ENCODE measurements at regions of chr6 and their contacts with region 1.

Region 1: GRCh38 chr6:84774157-84774984 is 10.0 kb upstream of the TBX18 start:
- DNase-seq: peak; percentile 81
- ATAC-seq: peak; percentile 92
- H3K4me3 Mint-ChIP-seq: peak overlapping the region; percentile 72
- H3K27ac Mint-ChIP-seq: no peak overlapping the region
- H3K4me1 Mint-ChIP-seq: peaks cover 19% of the 10 kb centered on the region
- H3K27me3 Mint-ChIP-seq: peaks cover 100% of the 10 kb centered on the region
- CTCF ChIP-seq: peak; percentile 75

Region 2: DNA sequence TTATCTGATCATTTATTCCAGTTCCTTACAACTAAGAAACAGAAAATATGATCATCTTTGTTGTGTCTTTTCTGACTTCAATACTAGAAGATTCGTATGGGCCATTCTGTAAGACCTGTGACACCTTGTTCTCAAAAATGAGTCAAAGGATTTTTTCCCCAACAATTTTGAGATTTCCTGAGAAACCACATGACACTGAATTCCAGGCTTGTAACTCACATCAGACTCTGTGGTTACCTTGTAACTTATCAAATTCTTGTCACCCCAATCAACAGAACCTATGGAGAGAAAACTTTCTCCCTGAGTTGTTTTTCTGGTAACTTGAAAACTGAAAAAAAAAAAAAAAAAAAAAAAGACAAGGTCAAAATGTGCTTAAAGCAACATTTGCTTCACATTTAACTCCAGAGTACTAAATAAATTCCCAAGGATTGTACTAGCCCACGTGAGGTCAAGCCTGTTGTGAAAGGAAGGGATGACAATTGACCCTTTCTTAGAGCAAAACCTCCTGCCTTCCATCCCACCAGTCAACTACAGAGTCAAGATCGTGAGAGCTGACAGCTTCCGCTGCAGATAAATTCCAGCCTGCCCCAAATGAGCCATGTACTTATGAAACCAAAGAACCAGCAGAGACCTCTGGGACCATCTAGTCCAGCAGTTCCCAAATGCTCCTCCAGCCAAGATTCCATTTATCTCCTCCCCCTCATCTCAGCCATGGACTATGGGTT is 150.3 kb before region 1 on chr6:
- CTCF ChIA-PET with region 1: no interaction called
- POLR2A ChIA-PET with region 1: no interaction called
- DNase-seq: no peak
- ATAC-seq: no peak
- H3K4me3 Mint-ChIP-seq: no peak overlapping the region
- H3K27ac Mint-ChIP-seq: no peak overlapping the region
- H3K4me1 Mint-ChIP-seq: peaks cover 28% of the 10 kb centered on the region
- H3K27me3 Mint-ChIP-seq: no peaks in the 10 kb centered on the region
- CTCF ChIP-seq: no peak

Region 3: DNA sequence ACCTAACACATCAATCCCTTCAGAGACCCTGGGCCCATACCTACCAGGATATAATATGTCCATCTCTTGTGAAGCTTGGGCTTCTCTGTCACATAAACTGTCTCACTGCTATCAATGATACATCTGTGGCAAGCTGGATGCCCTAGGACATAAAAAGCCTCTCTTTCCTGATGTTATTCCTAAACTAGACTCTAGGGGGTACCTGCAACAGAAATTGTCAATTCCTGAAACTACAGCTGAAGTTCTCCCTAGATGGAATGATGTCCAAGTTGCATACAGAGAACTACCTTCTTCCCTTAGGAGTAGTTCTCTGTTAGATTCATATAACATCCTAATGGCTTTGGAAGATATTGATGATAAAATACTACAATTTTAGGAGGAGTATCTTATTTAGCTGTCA is 45.8 kb before region 1 on chr6:
- CTCF ChIA-PET with region 1: interaction called, 13 read pairs
- POLR2A ChIA-PET with region 1: no interaction called
- DNase-seq: no peak
- ATAC-seq: peak; percentile 78
- H3K4me3 Mint-ChIP-seq: no peak overlapping the region
- H3K27ac Mint-ChIP-seq: no peak overlapping the region
- H3K4me1 Mint-ChIP-seq: no peaks in the 10 kb centered on the region
- H3K27me3 Mint-ChIP-seq: no peaks in the 10 kb centered on the region; the same call in none of the 2 replicates
- CTCF ChIP-seq: peak; percentile 53

Region 4: DNA sequence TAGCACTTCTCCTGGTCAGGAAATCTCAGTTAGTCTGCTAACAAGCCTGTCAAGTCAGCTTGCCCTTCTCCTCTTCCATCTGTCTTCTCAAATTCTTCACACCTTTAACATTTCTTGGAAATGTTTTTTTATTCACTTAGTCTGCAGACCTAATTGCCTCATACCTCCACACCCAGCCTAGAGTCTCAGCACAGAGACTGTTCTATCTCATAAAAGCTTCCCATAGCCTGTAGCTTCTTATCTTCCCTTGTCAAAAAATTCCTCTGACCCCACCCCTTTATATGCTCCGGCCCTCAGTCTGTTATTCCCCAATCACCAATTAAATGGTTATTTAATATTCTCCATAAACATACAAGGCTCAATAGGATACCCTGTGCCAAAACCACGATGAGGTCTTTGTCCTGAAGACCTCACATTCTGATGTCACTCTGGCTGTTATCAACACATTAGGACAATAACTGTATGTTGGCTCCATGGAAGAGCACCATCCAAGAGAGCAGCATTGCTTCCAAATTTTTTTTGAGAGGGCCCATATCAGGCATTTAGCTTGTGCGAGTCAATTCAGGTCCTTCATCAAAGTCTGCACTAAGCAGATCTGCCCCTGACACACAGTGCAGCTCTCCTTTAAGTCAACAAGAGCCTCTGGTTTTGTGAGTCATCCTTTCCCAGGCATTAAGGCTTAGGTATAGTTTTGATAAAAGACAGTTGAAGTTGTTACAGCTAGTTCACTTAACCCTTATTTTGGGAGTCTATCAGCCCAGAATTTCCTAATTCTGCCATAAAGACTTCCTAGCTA is 73.2 kb after region 1 on chr6:
- CTCF ChIA-PET with region 1: no interaction called
- POLR2A ChIA-PET with region 1: no interaction called
- DNase-seq: no peak
- ATAC-seq: no peak
- H3K4me3 Mint-ChIP-seq: no peak overlapping the region
- H3K27ac Mint-ChIP-seq: no peak overlapping the region
- H3K4me1 Mint-ChIP-seq: no peaks in the 10 kb centered on the region
- H3K27me3 Mint-ChIP-seq: no peaks in the 10 kb centered on the region
- CTCF ChIP-seq: no peak

Region 5: GRCh38 chr6:84967389-84967788 is 193.0 kb after region 1 on chr6:
- CTCF ChIA-PET with region 1: interaction called, 10 read pairs
- POLR2A ChIA-PET with region 1: no interaction called
- DNase-seq: peak; percentile 42
- ATAC-seq: peak; percentile 94
- H3K4me3 Mint-ChIP-seq: no peak overlapping the region
- H3K27ac Mint-ChIP-seq: no peak overlapping the region
- H3K4me1 Mint-ChIP-seq: peaks cover 5% of the 10 kb centered on the region; the same call in 1 of the 2 replicates
- H3K27me3 Mint-ChIP-seq: no peaks in the 10 kb centered on the region
- CTCF ChIP-seq: peak; percentile 28; the same call in 1 of the 2 replicates